ENCODE measurements at regions of chr11 and their contacts with region 1.

Region 1: GRCh38 chr11:2885676-2886081 is at the start of gene CDKN1C:
- DNase-seq: peak; percentile 90
- H3K4me3 ChIP-seq: peak within 1 kb of the TSS; percentile 81
- H3K27ac ChIP-seq: peak within 1 kb of the TSS; percentile 55
- H3K4me1 ChIP-seq: peaks cover 4% of the 10 kb centered on the region
- H3K27me3 ChIP-seq: peaks cover 8% of the 10 kb centered on the region
- CTCF ChIP-seq: no peak
- total RNA-seq, gene CDKN1C: 10.9 to 18.2 TPM

Region 2: DNA sequence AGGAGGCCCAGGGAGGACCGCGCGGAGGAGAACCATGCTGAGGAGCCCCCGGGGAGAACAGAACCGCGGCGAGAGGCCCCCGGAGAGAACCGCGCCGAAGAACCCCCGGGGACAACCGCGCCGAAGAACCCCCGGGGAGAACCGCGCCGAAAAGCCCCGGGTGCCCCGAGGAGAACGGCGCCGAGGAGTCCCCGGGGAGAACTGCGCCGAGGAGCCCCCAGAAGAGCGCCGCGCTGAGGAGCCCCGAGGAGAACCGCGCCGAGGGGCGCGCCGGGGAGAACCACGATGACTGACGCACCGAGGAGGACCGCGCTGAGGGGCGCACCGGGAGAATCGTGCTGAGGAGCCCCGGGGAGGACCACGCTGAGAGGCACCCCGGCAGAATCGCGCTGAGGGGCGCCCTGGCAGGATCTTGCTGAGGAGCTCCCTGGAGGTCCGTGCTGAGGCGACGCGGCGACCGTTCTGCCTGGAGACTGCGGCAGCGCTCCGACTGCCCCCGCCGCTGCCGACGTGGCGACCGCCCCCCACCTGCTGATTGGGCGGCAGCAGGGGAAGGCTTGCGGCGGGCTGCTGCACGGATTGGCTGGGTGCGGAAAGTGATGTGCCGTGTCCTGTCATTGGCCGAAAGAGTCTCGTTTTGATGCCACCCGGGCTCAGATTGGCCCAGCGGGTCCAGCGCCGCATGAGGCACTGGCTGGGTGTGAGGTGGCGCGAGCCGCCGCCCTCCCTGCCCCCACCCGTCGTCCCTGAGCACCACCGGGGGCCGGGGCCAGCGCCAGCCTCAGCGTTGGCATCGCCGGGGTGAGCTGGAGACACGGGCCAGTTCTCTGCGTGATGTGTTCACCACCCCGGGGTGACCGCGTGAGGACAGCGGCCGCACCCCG is 185.9 kb before region 1 on chr11 and contains the start of gene KCNQ1OT1:
- intact Hi-C with region 1: loop called (anchors 10 kb)
- DNase-seq: peak; percentile 90
- H3K4me3 ChIP-seq: peak within 1 kb of the TSS; percentile 62
- H3K27ac ChIP-seq: peak within 1 kb of the TSS; percentile 71
- H3K4me1 ChIP-seq: peaks cover 6% of the 10 kb centered on the region
- H3K27me3 ChIP-seq: no peaks in the 10 kb centered on the region
- CTCF ChIP-seq: no peak
- total RNA-seq, gene KCNQ1OT1: 0.77 to 1.5 TPM